ENCODE measurements at regions of chr11 and their contacts with region 1.

Region 1: DNA sequence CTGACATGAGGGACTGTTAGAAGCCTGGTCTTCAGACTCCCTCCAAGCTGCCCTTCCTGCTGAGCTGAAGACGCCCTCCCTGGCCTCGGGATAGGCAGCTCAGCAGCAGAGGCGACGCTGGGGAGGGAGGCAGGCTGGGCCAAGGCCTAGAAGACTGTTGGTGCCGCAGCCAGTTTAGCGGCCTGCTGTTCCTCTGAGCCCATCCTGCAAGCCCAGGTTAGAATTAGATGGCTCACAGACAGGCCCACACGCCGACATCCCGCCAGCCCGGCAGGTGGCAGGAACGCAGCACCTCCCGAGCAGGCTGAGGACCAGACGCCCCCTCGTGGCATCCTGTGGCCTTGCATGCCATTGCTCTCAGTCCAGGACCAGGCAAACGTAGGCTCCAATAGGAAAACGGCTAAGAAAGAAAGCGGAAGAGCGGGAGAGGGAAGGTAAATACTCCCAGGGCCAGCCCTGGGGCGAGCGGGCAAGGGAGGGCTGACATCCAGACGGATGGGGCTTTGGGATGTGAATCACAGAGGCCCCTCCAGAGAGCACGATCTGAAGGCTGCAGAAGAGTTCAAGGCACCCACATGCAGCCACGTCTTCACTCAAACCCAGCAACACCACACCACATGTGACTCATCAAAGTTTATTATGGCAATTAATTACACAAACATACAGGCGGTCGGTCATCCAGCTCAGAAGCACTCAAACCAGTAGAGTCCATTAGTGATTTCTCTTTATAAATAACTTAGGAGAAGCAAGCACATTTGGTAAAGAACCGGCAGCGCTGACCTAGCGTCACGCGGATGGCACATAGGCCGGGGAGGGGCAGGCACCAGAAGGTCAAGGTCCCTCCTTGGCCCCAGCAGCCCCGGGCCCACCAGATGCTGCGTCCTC is 27.6 kb downstream of the CD5 start:
- DNase-seq: peak; percentile 97
- CTCF ChIP-seq: peak; percentile 100

Region 2: DNA sequence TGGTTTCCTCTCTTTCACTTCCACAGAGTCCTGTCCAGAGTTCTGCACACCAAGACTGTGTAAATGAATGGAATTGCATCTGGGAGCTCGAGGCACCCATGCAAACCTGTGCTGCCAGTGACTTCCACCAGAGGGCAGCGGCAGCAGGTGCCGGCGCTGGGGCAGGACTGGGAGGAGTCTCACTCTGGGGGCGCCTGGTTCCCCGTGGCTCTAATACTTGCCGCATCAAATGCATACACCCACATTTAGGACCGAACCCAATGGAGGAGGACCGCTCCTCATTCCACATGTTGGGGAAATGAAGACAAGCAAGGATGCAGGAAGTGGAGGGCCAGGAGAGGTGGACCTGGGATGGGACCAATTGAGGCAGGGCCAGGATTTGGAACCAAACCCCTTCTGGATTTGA is 159.5 kb before region 1 on chr11:
- CTCF ChIA-PET with region 1: interaction called, 11 read pairs
- POLR2A ChIA-PET with region 1: no interaction called
- DNase-seq: peak; percentile 81
- CTCF ChIP-seq: peak; percentile 90

Region 3: DNA sequence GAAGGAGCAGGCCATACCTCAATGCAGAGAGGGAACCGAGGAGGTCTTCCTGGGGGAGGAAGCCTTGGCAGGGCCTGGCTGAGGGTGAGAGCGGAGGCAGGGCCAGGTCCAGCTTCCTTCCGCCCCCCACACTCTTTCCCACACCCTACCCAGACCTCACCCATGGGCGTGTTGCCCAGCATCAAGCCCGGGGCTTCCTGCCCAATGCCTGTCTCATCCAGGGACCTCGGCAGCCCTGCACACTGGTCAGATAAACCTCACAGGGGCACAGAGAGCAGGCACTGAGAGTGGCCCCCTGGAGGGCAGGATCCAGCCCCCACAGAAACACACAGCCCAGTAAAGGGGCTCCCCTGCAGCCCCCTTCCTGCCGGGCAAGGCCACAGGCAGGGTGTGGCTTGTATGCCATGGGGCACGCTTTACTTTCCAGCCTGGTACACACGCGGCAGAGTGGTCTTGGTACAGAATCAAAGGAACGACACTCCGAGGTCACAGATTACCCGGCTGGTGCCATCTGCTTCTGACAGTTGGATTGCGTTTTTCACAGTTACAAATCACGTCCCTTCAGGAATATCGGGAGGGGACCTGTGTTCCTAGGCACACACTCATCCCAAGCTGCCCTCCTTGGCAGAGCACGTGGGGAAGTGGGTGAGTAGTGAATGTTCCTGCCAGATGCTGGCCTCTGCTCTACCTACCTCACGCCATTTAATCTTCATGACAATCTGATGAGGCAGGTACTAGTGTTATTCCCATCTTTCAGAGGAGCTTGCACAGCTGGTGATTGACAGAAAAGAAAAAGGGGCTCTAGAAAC is 47.6 kb before region 1 on chr11:
- CTCF ChIA-PET with region 1: interaction called, 15 read pairs
- POLR2A ChIA-PET with region 1: no interaction called
- DNase-seq: no peak
- CTCF ChIP-seq: no peak

Region 4: DNA sequence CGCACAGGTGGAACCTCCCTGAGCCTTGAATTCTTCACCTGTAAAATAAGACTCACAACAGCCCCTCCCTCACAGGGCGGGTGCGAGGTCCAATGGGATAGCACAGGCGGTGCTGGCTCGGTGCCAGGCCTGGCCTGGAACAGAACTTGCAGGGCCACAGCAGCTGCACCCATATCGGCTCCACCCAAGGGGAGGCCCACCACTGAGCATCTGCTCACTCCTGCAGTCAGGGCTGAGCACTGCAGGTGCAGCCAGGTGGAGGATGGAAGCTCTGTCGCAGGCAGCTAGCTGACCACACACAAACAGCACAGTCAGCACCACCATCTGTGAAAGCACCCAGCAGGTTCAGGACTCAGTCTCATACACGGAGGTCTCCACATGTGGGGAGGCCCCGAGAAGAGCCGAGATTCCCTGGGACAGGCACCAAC is 11.7 kb after region 1 on chr11:
- CTCF ChIA-PET with region 1: interaction called, 65 read pairs
- POLR2A ChIA-PET with region 1: no interaction called
- DNase-seq: no peak
- CTCF ChIP-seq: no peak

Region 5: DNA sequence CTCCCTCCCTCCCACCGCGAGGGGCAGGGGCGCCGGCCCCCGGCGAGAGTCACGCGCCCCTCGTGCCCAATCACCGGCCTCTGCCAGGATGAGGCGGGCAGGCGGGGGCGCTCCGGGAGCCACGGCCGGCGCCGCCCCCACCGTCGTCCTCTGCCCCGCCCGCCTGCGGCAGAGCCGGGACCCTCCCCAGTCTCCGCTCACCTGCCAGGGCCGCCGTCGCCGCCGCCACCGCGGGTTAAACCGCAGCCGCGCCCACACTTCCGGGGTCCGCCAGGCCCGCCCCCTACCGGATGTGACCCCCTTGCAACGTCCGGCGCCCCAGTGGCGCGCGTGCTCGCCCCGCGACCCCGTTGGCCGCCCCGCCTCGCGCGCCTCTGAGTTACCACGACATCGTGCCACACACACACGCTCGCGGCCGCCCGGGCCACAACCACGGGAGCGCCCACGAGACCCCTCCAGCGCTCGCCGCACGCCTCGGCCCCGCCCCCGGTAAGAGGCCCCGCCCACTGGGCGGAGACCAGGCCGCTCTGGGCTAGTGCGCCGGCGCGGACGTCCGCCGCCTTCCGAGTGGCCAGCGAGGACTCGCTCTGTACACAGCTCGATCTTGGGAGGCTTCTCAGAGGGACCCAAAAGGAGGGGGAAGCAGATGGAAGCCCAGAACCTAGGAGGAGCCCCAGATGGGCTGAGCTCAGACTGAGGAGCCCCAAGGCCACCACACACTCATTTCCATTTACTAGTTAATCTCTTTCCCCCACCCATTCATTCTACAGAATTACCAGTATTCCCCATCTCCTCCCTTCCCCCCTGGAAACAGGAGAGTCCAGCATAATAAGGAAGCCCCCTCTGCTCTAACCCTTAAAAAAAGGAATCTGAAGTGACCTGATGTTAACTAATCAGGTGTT is 31.6 kb after region 1 on chr11 and contains the start of gene VPS37C:
- CTCF ChIA-PET with region 1: interaction called, 18 read pairs
- POLR2A ChIA-PET with region 1: no interaction called
- DNase-seq: peak; percentile 96
- CTCF ChIP-seq: peak; percentile 3

Region 6: DNA sequence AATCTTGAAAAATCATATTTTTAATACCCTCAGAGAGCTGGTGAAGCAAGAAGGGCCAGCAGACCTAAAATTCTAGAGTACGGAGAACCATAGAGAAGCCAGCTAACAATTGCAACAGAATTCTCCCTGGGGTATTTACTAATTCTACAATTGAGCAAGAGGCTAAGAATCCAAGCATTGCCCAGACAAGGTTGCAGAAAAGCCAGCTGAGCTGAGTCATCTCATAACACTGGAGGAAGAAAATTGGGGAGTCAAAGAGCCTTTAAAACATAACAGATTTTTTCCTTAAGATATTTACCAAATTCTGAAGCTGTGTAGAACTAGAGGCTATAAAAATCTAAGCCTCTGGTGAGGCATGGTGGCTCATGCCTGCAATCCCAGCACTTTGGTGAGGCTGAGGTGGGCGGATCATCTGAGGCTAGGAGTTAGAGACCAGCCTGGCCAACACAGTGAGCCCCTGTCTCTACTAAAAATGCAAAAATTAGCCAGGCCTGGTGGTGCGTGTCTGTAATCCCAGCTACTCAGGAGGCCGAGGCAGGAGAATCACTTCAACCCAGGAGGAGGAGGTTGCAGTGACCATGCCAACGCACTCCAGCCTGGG is 248.9 kb after region 1 on chr11:
- CTCF ChIA-PET with region 1: no interaction called
- POLR2A ChIA-PET with region 1: no interaction called
- DNase-seq: no peak
- CTCF ChIP-seq: no peak

Measured in GM10248 (cell line).